ENCODE measurements at regions of chr6 and their contacts with region 1.

Region 1: GRCh38 chr6:41920921-41921711 is at the starts of genes BYSL and MED20:
- DNase-seq: peak; percentile 95
- H3K4me3 ChIP-seq: peak within 1 kb of the TSS; percentile 64 to 81 (median 74)
- H3K27ac ChIP-seq: peak within 1 kb of the TSS; percentile 95 to 98 (median 96)
- H3K4me1 ChIP-seq: peaks cover 18 to 36% (median 27%) of the 10 kb centered on the region in 4 donors
- H3K27me3 ChIP-seq: no peaks in the 10 kb centered on the region
- CTCF ChIP-seq: peak; percentile 96 to 99 (median 98)
- EP300 ChIP-seq: no peak
- POLR2A ChIP-seq: peak; percentile 93
- total RNA-seq, gene BYSL: 3.4 to 5.9 (median 5.2) TPM
- total RNA-seq, gene MED20: 15.4 to 25.7 (median 18.5) TPM

Region 2: DNA sequence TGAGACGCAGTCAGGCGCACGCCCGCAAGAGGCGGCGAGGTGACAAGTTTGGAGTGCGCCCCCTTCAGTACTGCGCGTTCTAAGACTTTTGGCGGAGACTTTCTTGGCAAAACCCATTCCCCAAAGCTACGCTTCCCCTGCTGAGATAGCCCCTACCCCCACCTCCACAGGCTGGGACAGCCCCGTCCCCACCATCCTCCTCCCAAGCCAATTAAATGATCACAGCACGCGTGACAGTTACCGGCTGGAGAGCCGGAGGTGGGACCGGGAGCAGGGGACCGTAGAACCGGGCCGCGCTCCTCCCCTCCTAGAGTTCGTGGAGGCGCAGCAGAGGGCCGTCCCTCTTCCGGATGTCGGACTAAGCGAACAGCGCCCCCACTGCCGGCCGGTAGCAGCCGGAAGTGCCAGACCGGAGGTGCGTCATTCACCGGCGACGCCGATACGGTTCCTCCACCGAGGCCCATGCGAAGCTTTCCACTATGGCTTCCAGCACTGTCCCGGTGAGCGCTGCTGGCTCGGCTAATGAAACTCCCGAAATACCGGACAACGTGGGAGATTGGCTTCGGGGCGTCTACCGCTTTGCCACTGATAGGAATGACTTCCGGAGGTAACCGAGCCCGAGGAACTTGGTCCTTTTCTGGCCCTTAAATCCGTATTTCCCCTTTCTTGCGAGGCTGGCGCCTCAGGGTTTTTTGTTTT is 133.7 kb before region 1 on chr6 and contains the start of gene TOMM6:
- in situ Hi-C with region 1: loop called in 1 of 4 experiments (anchors 25 kb)
- intact Hi-C with region 1: loop called (anchors 5 kb)
- DNase-seq: peak; percentile 97
- H3K4me3 ChIP-seq: peak within 1 kb of the TSS; percentile 70 to 96 (median 90)
- H3K27ac ChIP-seq: peak within 1 kb of the TSS; percentile 93 to 96 (median 94)
- H3K4me1 ChIP-seq: peaks cover 7 to 18% (median 17%) of the 10 kb centered on the region in 4 donors
- H3K27me3 ChIP-seq: no peaks in the 10 kb centered on the region
- CTCF ChIP-seq: peak; percentile 89 to 99 (median 95)
- EP300 ChIP-seq: no peak
- POLR2A ChIP-seq: peak; percentile 90
- total RNA-seq, gene TOMM6: 24.1 to 93.1 (median 85.6) TPM

Region 3: DNA sequence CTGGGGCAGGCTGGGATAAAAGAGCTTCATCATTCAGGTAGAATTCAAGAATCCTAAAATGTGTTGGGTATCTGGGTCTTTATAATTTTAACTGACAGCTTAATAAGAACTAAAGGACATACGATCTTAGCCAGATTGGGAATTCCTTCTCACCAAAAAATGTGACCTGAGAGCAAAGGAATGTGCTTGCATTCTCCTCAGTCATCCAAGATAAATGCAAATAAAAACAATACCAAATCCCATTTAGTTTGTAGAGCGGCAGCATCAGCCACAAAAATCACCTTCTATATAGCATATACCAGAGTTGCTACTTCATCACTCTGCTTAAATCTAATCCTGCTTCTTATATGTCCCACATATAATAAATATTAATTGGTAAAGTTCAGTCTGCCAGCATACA is 42.9 kb before region 1 on chr6:
- in situ Hi-C with region 1: no loop called
- intact Hi-C with region 1: no loop called
- DNase-seq: no peak
- H3K4me3 ChIP-seq: no peak overlapping the region
- H3K27ac ChIP-seq: no peak overlapping the region
- H3K4me1 ChIP-seq: no peaks in the 10 kb centered on the region
- H3K27me3 ChIP-seq: no peaks in the 10 kb centered on the region
- CTCF ChIP-seq: no peak
- EP300 ChIP-seq: no peak
- POLR2A ChIP-seq: no peak

Region 4: GRCh38 chr6:41909727-41910126 is 11.4 kb before region 1 on chr6:
- in situ Hi-C with region 1: no loop called
- intact Hi-C with region 1: no loop called
- DNase-seq: no peak
- H3K4me3 ChIP-seq: no peak overlapping the region
- H3K27ac ChIP-seq: no peak overlapping the region
- H3K4me1 ChIP-seq: no peaks in the 10 kb centered on the region
- H3K27me3 ChIP-seq: no peaks in the 10 kb centered on the region
- CTCF ChIP-seq: no peak
- EP300 ChIP-seq: no peak
- POLR2A ChIP-seq: no peak

Measured in transverse colon (tissue), 4 donors.